ENCODE measurements at regions of chr2 and their contacts with region 1.

Region 1: GRCh38 chr2:197113275-197113711 is 186.8 kb upstream of the PGAP1 start:
- DNase-seq: peak; percentile 48
- CTCF ChIP-seq: peak; percentile 49

Region 2: DNA sequence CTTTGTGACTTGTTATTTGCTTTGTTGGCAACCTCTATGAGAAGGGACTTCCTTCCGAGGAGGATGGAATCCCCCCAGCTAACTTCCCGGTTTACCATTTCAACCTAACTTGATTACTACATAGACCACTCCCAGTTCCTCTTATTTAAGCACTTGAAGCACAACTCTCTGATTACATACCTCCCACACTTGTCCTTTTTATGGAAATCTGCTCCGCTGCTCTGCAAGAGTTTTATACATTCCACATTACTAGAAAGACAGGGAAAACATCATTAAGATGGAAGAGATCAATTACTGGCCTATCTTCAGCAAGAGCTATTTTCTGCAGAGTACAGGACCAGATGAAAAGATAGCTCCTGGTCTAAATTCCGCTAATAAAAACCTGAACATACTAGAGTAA is 26.8 kb before region 1 on chr2:
- CTCF ChIA-PET with region 1: interaction called, 13 read pairs
- POLR2A ChIA-PET with region 1: no interaction called
- DNase-seq: peak; percentile 12
- CTCF ChIP-seq: no peak

Region 3: DNA sequence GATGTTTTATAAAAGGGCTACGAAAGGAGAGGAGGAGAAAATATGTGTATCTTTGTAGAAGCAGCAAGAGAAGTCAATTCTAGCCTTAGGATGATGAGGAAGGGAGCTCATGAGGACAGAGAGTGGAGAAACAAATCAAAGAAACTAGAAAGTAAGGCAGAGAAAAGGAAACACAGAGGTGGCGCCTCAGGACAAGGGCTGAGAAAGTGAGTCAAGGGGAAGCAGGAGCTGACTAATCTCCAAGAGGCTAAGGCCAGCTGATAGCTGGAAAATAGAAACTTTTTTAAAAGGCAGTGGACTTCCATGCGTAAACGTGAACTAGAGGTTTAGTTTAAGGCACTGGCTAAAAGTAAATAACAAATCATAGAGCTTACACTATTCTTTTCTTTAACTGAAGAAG is 23.9 kb after region 1 on chr2:
- CTCF ChIA-PET with region 1: interaction called, 20 read pairs
- POLR2A ChIA-PET with region 1: no interaction called
- DNase-seq: no peak
- CTCF ChIP-seq: no peak

Region 4: GRCh38 chr2:197159661-197160211 is 46.4 kb after region 1 on chr2:
- CTCF ChIA-PET with region 1: interaction called, 15 read pairs
- POLR2A ChIA-PET with region 1: no interaction called
- DNase-seq: no peak
- CTCF ChIP-seq: no peak

Region 5: DNA sequence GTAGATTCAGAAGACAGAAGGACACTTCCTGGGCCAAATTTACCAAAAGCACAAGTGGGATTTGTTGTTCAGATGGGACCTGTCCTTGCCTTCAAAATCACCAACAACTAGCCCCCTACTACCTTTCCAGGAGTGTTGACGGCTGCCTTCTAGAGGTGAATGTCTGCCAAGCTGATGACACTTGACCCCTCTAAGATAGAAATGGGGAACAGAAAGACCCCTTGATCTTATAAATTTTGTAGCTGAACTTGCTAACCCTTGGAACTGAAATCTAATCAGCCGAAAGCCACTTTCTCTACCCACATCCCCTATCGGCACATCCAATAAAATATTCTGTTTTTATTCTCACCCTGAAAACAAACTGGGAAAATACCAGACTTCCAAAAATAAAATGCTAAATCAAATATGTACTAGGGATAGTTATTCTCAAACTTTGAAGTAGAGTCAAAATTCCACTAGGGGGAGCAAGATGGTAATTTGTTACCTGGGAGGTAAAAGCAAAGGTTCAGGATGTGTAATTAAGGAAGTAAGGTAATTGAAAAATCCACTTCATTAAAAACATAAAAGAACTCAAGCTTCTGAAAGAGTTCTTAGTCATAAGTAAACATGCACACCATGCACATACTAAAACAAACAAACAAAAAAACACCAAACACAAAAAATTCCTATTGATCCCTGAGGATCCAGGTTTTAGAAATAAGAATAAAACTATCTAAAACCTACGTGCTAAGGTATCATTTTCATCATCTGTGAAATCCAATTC is 78.1 kb after region 1 on chr2:
- CTCF ChIA-PET with region 1: interaction called, 17 read pairs
- POLR2A ChIA-PET with region 1: no interaction called
- DNase-seq: peak; percentile 43
- CTCF ChIP-seq: peak; percentile 49

Region 6: GRCh38 chr2:197359859-197360258 is 246.6 kb after region 1 on chr2:
- CTCF ChIA-PET with region 1: interaction called, 20 read pairs
- POLR2A ChIA-PET with region 1: no interaction called
- DNase-seq: no peak
- CTCF ChIP-seq: peak; percentile 10

Measured in GM10248 (cell line).